ENCODE measurements at regions of chr11 and their contacts with region 1.

Region 1: GRCh38 chr11:506238-506994 is 626 bp downstream of the RNH1 start:
- DNase-seq: peak; percentile 97
- ATAC-seq: peak; percentile 78 to 85
- H3K4me3 ChIP-seq: peak overlapping the region; percentile 80 to 94 (median 86)
- H3K27ac ChIP-seq: peak overlapping the region; percentile 96 to 100 (median 98)
- H3K4me1 ChIP-seq: peaks cover 23 to 39% of the 10 kb centered on the region in 2 donors
- H3K27me3 ChIP-seq: no peaks in the 10 kb centered on the region
- CTCF ChIP-seq: peak in 2 of 5 experiments; percentile 29 to 38
- POLR2A ChIP-seq: peak; percentile 83 to 84

Region 2: GRCh38 chr11:236774-237767 is 269.3 kb before region 1 on chr11 and contains the start of gene PSMD13:
- in situ Hi-C with region 1: no loop called
- intact Hi-C with region 1: loop called (anchors 2 kb)
- DNase-seq: peak; percentile 57 to 78
- ATAC-seq: peak; percentile 87 to 91
- H3K4me3 ChIP-seq: peak within 1 kb of the TSS; percentile 88 to 100 (median 98)
- H3K27ac ChIP-seq: peak within 1 kb of the TSS; percentile 97 to 99 (median 97)
- H3K4me1 ChIP-seq: peaks cover 42 to 43% of the 10 kb centered on the region in 2 donors
- H3K27me3 ChIP-seq: no peaks in the 10 kb centered on the region
- CTCF ChIP-seq: no peak
- POLR2A ChIP-seq: peak; percentile 71 to 94
- total RNA-seq, gene PSMD13: 128 to 189 (median 163) TPM

Region 3: DNA sequence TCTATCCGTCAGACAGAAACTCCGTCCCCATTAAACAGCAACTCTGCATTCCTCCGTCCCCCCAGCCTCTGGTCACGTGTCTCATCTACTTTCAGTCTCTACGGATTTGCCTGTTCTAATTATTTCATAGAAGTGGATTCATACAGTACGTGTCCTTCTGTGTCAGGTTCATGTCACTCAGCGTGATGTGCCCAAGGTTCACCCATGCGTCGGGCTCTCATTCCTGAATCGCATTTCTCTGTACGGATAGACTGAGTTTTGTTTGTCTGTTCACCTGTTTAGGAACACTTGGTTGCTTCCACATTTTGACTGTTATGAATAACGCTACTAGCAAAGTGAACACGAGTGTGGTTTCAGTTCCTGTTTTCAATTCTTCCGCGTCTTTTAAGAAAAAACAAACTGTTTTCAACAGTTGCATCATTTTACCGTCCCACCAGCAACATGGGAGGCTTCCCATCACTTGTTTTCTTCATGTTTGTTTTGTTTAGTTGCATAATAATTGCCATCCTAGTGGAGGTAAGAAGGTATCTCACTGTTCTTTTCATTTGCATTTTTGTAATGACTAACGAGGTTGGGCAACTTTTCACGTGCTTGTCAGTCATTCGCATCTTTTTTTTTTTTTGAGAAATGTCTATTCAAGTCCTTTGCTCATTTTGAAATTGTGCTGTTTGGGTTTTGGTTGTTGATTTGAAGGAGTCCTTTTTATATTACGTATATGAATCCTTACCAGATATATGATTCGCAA is 237.1 kb before region 1 on chr11:
- in situ Hi-C with region 1: no loop called
- intact Hi-C with region 1: no loop called
- DNase-seq: no peak
- ATAC-seq: peak; percentile 30 to 40
- H3K4me3 ChIP-seq: peak overlapping the region in 3 of 4 donors; percentile 25 to 39 (median 25)
- H3K27ac ChIP-seq: peak overlapping the region; percentile 42 to 63 (median 55)
- H3K4me1 ChIP-seq: no peaks in the 10 kb centered on the region
- H3K27me3 ChIP-seq: peaks cover 0 to 10% (median 9%) of the 10 kb centered on the region in 3 donors
- CTCF ChIP-seq: no peak
- POLR2A ChIP-seq: no peak

Region 4: GRCh38 chr11:447923-448731 is 58.3 kb before region 1 on chr11:
- in situ Hi-C with region 1: loop called in 2 of 4 experiments (anchors 10 kb)
- intact Hi-C with region 1: loop called (anchors 1 kb)
- DNase-seq: peak; percentile 88 to 90
- ATAC-seq: peak; percentile 82 to 85
- H3K4me3 ChIP-seq: peak overlapping the region; percentile 66 to 94 (median 85)
- H3K27ac ChIP-seq: peak overlapping the region; percentile 84 to 98 (median 96)
- H3K4me1 ChIP-seq: peaks cover 22 to 25% of the 10 kb centered on the region in 2 donors
- H3K27me3 ChIP-seq: peaks cover 0 to 10% (median 6%) of the 10 kb centered on the region in 3 donors
- CTCF ChIP-seq: peak; percentile 68 to 90 (median 80)
- POLR2A ChIP-seq: peak; percentile 78 to 80

Region 5: GRCh38 chr11:477052-477715 is 29.2 kb before region 1 on chr11:
- in situ Hi-C with region 1: no loop called
- intact Hi-C with region 1: no loop called
- DNase-seq: no peak
- ATAC-seq: no peak
- H3K4me3 ChIP-seq: no peak overlapping the region
- H3K27ac ChIP-seq: no peak overlapping the region
- H3K4me1 ChIP-seq: no peaks in the 10 kb centered on the region
- H3K27me3 ChIP-seq: no peaks in the 10 kb centered on the region
- CTCF ChIP-seq: no peak
- POLR2A ChIP-seq: no peak

Region 6: DNA sequence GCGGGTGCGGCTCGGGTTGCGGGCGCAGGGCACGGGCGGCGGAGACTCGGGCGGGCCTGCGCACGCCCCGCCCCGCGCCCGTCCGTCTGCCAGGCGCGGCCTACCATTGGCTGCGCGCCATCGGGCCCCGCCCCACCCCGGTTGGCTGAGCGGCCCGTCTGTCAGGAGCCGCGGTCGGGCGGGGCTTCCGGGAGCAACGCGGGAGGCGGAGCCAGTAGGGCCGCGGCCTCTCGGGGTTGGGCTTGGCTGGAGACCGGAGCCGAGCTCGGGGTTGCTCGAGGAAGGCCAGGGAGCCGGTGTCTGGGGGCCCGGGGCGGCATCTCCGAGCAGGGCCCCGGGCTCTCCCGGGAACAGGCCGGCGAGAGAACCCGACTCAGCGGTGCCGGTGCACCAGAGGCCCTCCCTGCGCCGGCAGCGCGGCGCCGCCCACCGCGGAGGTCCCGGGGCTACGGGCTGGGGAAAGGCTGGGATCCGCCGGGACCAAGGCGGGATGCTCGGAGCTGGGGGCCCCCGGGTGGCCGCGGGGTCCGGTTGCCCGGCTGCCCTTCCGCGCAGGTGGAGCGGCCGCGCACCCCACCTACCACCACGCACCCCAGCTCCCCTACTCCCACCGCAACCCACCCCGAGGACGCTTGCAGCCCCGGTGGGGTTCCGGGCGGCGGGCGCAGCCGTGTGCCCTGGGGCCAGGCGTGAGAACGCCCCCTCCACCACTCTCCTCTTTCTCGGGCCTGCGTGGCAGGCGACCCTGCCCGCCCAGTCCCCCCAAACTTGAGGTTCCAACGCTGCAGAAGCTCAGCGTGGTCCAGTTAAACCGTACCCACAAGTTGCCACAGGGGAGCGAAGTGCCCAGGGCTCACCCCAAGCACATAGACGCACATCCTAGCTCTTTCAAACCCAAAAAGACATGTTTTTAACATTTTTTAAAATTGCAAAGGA is 29.4 kb after region 1 on chr11 and contains the start of gene HRAS:
- in situ Hi-C with region 1: no loop called
- intact Hi-C with region 1: loop called (anchors 2 kb)
- DNase-seq: peak; percentile 91 to 92
- ATAC-seq: peak; percentile 84 to 88
- H3K4me3 ChIP-seq: peak within 1 kb of the TSS; percentile 75 to 82 (median 78)
- H3K27ac ChIP-seq: peak within 1 kb of the TSS; percentile 80 to 92 (median 90)
- H3K4me1 ChIP-seq: peaks cover 18 to 29% of the 10 kb centered on the region in 2 donors
- H3K27me3 ChIP-seq: peaks cover 21 to 25% (median 25%) of the 10 kb centered on the region in 3 donors
- CTCF ChIP-seq: no peak
- POLR2A ChIP-seq: peak; percentile 63 to 73
- total RNA-seq, gene HRAS: 17.1 to 50.0 (median 37.6) TPM

Region 7: DNA sequence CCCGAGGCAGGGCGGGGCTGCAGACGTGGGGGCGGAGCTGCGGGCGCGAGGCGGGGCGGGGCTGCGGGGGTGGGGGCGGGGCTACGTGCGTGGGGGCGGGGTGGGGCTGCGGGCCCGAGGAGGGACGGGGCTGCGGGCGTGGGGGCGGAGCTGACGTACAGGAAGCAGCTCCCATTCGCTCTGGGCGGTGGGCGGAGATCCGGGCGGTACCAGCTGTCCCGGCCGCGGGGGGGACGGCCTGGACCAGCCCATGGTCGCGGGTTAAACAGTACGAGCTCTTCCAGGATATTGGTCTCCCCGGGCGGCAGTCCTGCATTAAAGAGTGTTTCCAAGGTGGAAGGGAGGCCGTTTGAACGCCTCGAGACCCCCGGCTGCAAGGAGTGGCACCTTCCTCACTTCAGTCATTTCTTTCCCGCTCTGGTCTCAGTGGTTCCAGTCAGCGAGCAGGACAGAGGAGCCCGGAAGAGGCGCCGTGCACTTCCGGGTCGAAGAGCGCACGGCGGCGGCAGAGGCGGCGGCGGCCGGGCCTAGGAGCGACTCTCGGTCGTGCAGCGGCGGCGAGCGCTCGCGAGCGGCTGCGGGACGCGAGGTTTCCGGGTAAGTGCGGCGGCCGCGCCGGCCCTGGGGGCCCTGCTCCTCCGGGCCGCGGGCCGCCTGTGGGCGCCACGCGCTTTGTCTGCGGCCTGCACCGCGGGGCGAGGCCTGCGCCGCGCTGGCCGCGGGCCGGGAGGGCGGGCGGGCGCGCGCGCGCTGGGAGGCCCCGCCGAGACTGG is 69.8 kb after region 1 on chr11 and contains the start of gene PHRF1:
- in situ Hi-C with region 1: no loop called
- intact Hi-C with region 1: loop called (anchors 1 kb)
- DNase-seq: peak; percentile 93 to 95
- ATAC-seq: peak; percentile 93 to 97
- H3K4me3 ChIP-seq: peak within 1 kb of the TSS; percentile 75 to 99 (median 80)
- H3K27ac ChIP-seq: peak within 1 kb of the TSS; percentile 94 to 99 (median 96)
- H3K4me1 ChIP-seq: peaks cover 42 to 62% of the 10 kb centered on the region in 2 donors
- H3K27me3 ChIP-seq: no peaks in the 10 kb centered on the region
- CTCF ChIP-seq: no peak
- POLR2A ChIP-seq: peak; percentile 89 to 94
- total RNA-seq, gene PHRF1: 9.2 to 22.6 (median 20.8) TPM

Measured in gastrocnemius medialis (tissue), 4 donors.